Calu3 (cell line): ENCODE measurements at regions of chr17 and their contacts with region 1.

Region 1: GRCh38 chr17:39401412-39402243 is at the start of gene FBXL20:
- DNase-seq: peak; percentile 100
- H3K4me3 Mint-ChIP-seq: peak within 1 kb of the TSS; percentile 89
- H3K27ac Mint-ChIP-seq: peak within 1 kb of the TSS; percentile 98
- H3K4me1 Mint-ChIP-seq: peaks cover 40% of the 10 kb centered on the region
- H3K27me3 Mint-ChIP-seq: no peaks in the 10 kb centered on the region
- CTCF ChIP-seq: no peak
- total RNA-seq, gene FBXL20: 70.3 and 71.5 TPM in 2 replicates

Region 2: DNA sequence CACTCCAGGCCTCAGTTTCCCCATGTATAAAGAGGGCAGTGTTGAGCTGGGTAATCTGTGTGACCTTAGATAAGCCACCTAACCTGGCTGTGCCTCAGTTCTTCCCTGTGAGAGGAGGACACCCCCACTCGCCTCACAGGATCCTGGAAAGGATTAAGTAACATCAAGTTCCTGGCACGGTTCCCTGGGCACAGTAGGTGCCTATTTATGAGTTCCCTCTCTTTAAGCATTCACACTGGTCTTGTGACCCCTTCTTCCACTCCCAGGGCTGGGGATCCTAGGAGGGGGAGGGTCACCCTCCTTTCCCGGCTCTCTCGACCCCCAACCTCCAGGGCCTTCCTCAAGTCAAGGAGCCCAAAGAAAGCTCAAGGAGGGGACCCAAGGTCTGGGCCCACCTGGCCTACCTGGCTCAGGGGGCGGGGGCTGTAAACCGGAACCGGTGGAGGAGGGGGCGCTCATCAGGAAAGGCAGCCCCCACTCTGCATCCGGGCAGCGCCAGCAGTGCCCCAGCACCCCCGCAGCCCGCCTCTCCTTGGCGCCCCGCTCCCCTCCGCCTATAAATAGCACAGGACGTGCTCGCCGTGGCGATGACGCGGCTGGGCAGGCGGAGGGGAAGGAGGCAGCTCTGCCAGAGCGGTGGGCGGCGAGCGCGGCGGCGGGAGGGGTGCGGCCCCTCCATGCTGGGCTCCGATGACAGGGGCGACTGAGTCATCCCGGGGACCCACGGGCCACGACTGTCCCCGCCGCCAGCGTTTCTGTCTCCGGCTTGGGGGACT is 192.1 kb before region 1 on chr17:
- CTCF ChIA-PET with region 1: interaction called, 9 read pairs
- intact Hi-C with region 1: loop called (anchors 5 kb)
- DNase-seq: peak; percentile 81
- H3K4me3 Mint-ChIP-seq: peak overlapping the region; percentile 55
- H3K27ac Mint-ChIP-seq: peak overlapping the region; percentile 16
- H3K4me1 Mint-ChIP-seq: peaks cover 43% of the 10 kb centered on the region
- H3K27me3 Mint-ChIP-seq: peaks cover 63% of the 10 kb centered on the region
- CTCF ChIP-seq: peak; percentile 13

Region 3: GRCh38 chr17:39270923-39271322 is 130.7 kb before region 1 on chr17:
- CTCF ChIA-PET with region 1: interaction called, 10 read pairs
- intact Hi-C with region 1: loop called (anchors 2 kb)
- DNase-seq: peak; percentile 72
- H3K4me3 Mint-ChIP-seq: no peak overlapping the region
- H3K27ac Mint-ChIP-seq: peak overlapping the region; percentile 26
- H3K4me1 Mint-ChIP-seq: no peaks in the 10 kb centered on the region
- H3K27me3 Mint-ChIP-seq: no peaks in the 10 kb centered on the region
- CTCF ChIP-seq: peak; percentile 58

Region 4: GRCh38 chr17:39281806-39282205 is 119.8 kb before region 1 on chr17:
- CTCF ChIA-PET with region 1: interaction called, 12 read pairs
- intact Hi-C with region 1: no loop called
- DNase-seq: no peak
- H3K4me3 Mint-ChIP-seq: no peak overlapping the region
- H3K27ac Mint-ChIP-seq: peak overlapping the region; percentile 45
- H3K4me1 Mint-ChIP-seq: peaks cover 14% of the 10 kb centered on the region
- H3K27me3 Mint-ChIP-seq: no peaks in the 10 kb centered on the region
- CTCF ChIP-seq: no peak

Region 5: DNA sequence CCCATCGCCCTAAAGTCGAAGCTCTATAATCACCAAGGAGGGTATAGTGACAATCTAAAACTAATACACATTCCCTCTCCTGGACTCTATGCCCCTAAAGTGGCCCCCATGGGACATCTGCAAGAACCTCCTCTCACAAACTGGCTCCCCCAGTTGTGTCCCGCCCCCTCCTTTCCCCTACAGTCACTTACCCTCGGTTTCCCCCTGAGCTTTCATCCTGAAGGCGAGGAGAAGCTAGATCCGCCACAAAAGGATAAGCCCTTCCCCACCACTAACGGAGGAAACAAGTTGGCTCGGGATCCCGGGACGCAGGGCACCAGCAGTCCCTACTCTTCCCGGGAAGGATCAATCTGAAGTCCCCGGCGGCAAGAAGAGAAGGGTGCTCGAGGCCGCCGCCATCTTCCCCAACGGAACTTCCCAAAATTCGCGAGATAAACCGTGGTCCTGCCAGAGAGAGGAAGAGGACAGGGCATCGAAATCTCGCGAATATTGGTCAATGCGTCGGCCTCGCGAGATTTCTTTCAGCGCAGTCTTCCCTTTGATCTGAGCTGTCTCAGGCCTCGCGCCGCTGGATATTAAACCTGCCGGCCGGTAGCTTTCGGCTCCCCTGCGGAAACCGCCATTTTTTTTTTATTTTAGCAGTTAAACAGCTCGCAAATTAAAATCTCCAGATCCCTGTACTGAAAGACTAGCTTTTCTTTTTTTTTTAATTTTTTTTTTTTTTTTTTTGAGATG is 49.4 kb after region 1 on chr17 and contains the start of gene MED1:
- CTCF ChIA-PET with region 1: interaction called, 17 read pairs
- intact Hi-C with region 1: no loop called
- DNase-seq: peak; percentile 100
- H3K4me3 Mint-ChIP-seq: peak within 1 kb of the TSS; percentile 94
- H3K27ac Mint-ChIP-seq: peak within 1 kb of the TSS; percentile 98
- H3K4me1 Mint-ChIP-seq: peaks cover 26% of the 10 kb centered on the region
- H3K27me3 Mint-ChIP-seq: no peaks in the 10 kb centered on the region
- CTCF ChIP-seq: no peak
- total RNA-seq, gene MED1: 227 and 230 TPM in 2 replicates